ENCODE measurements at regions of chr18 and their contacts with region 1.

Region 1: DNA sequence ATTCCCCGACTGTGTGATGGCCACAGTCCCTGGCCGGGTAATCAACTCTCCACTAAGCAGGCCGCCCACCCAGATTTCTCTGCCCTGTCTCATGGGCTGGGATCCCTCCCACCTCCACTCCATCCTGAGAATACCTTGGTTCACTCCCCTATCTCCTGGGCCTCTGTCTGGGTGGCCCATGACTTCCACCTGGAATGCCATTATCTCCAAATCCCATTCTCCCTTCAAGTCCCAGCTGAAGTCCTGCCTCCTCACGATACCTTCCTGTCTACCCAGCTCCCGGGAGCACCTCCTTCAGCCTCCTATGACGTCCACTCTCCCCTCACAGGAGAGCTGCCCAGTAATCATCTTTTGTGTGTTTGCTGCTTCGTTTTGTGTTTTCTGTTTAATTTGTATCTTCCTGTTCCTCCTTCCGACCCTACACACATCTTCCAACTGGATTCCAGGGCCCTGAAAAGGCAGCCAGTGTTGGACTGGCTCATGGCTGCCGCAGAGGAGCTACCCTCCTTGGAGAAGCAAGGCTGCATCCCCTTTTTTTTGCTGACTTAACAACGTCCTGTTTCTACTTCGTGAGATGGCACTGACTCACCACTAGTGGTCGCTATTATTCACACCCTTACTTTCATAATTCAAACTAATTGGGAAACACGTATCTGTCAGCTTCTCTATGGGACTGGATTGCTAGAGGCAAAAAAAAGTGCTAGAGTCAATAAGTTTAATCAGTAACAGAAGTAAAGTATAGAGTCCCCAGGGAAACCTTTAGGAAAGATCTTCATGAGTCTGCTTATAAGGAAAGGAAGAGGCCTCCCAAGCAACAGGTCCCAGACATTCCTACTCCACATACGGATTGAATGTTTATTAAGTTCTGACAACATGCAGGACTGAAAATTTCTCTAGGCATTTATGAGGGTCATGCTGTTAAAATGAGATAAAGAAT is 171.9 kb upstream of the GATA6 start:
- DNase-seq: no peak
- H3K4me3 Mint-ChIP-seq: no peak overlapping the region
- H3K27ac Mint-ChIP-seq: no peak overlapping the region
- H3K4me1 Mint-ChIP-seq: peaks cover 2% of the 10 kb centered on the region
- H3K27me3 Mint-ChIP-seq: no peaks in the 10 kb centered on the region

Region 2: GRCh38 chr18:22108674-22109073 is 111.2 kb after region 1 on chr18:
- intact Hi-C with region 1: no loop called
- DNase-seq: no peak
- H3K4me3 Mint-ChIP-seq: no peak overlapping the region
- H3K27ac Mint-ChIP-seq: no peak overlapping the region
- H3K4me1 Mint-ChIP-seq: no peaks in the 10 kb centered on the region
- H3K27me3 Mint-ChIP-seq: no peaks in the 10 kb centered on the region

Region 3: DNA sequence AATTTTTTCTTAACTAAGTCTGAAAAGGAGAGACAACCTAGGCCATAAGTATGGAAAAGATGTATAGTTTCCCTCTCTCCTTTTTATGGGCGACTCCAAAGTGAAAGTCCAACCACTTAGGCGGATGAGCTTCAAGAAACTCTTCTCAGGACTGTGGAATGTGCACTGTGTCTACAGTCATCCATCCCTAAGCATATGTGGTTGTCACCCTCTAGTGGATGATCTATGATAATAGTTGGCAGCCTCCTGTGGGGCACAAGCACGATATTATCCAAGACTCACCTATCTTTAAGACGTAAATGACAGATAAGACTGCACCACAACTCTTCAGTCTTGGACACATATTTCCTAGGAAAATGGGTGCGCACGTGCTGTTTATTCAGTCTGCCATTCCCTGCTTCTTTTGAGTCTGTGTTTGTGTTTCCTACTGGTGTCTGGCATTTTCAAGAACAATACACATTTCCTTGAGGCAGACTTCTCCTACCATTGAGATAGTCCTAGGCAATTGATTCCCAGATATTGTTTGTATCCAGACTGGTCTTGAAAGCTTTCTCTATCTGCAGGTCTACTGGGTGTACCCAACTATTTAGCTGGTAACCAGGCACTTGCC is 565.7 kb after region 1 on chr18:
- intact Hi-C with region 1: loop called (anchors 5 kb)
- DNase-seq: no peak
- H3K4me3 Mint-ChIP-seq: no peak overlapping the region
- H3K27ac Mint-ChIP-seq: no peak overlapping the region
- H3K4me1 Mint-ChIP-seq: peaks cover 4% of the 10 kb centered on the region
- H3K27me3 Mint-ChIP-seq: peaks cover 23% of the 10 kb centered on the region

Measured in activated T-helper 2 cell treated with anti-CD3 and anti-CD28 coated beads, Interferon-gamma antibody, Interleukin-2, Interleukin-4, amounts not matched to agents 10 μg/mL and 5 μg/mL and 100 μg/mL, durations not matched to agents 14 hours and 24 hours and 36 hours (primary cell).